B cell (primary cell): ENCODE measurements at regions of chr15 and their contacts with region 1.

Region 1: GRCh38 chr15:64552281-64552948 is 92.0 kb downstream of the ZNF609 start:
- DNase-seq: no peak
- ATAC-seq: no peak
- H3K4me3 ChIP-seq: no peak overlapping the region
- H3K4me3 Mint-ChIP-seq: no peak overlapping the region
- H3K27ac ChIP-seq: no peak overlapping the region
- H3K27ac Mint-ChIP-seq: no peak overlapping the region
- H3K4me1 ChIP-seq: no peaks in the 10 kb centered on the region
- H3K4me1 Mint-ChIP-seq: peaks cover 5% of the 10 kb centered on the region
- H3K27me3 ChIP-seq: no peaks in the 10 kb centered on the region
- H3K27me3 Mint-ChIP-seq: no peaks in the 10 kb centered on the region
- CTCF ChIP-seq: no peak

Region 2: DNA sequence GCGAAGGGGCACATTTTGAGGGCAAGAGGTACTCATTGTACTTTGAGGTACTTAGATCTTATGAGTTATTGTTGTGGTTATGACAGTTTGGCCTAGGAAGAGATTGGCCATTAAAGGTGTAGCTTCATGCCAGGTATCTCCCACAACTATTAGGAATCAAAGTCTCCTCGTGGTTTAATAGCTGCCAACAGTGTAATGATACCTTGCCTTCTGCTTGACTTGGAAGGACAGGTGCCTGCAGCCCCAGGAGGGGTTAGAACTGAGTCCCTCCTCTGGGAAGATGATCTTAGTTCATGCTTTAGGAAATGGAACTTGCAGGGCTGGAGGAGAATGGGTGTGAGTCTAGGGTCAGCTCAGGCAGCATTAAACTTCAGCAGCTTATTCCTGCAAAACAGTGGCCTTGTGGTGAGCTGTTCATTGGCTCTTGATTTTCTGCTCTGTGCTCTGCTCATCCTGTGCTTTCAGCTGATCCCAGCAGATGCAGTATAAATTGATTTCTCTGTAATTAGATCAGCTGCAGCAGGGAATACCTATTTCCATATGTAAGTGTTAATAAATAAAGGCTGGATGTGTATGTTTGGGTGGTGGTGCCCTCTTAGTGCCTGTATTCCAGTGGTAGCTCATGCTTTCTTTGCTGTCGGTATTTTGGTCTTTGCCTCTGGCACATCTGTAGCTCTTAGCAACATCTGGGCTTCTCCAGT is 51.6 kb before region 1 on chr15:
- CTCF ChIA-PET with region 1: no interaction called
- POLR2A ChIA-PET with region 1: interaction called, 10 read pairs
- intact Hi-C with region 1: no loop called
- DNase-seq: no peak
- ATAC-seq: no peak
- H3K4me3 ChIP-seq: no peak overlapping the region
- H3K4me3 Mint-ChIP-seq: no peak overlapping the region
- H3K27ac ChIP-seq: no peak overlapping the region
- H3K27ac Mint-ChIP-seq: no peak overlapping the region
- H3K4me1 ChIP-seq: peaks cover 15% of the 10 kb centered on the region in 2 donors
- H3K4me1 Mint-ChIP-seq: peaks cover 32% of the 10 kb centered on the region
- H3K27me3 ChIP-seq: no peaks in the 10 kb centered on the region
- H3K27me3 Mint-ChIP-seq: no peaks in the 10 kb centered on the region
- CTCF ChIP-seq: no peak

Region 3: DNA sequence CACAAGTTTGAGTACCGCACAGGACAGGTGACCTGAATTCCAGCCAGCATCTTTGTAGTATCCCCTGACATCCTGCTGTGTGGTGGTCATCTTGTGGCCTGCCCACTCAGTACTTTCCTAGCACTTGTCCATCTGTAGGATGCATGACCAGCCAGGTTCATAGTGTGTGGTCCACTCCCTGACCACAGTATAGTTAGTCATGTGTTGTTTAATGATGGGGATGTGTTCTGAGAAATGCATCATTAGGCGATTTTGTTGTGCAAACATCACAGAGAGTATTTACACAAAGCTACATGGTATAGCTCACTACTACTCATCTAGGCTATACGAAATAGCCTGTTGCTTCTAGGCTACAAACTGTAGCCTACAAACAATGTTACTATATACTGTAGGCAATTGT is 239.9 kb after region 1 on chr15:
- CTCF ChIA-PET with region 1: no interaction called
- POLR2A ChIA-PET with region 1: no interaction called
- intact Hi-C with region 1: no loop called
- DNase-seq: no peak
- ATAC-seq: no peak
- H3K4me3 ChIP-seq: no peak overlapping the region
- H3K4me3 Mint-ChIP-seq: no peak overlapping the region
- H3K27ac ChIP-seq: no peak overlapping the region
- H3K27ac Mint-ChIP-seq: no peak overlapping the region
- H3K4me1 ChIP-seq: no peaks in the 10 kb centered on the region
- H3K4me1 Mint-ChIP-seq: no peaks in the 10 kb centered on the region
- H3K27me3 ChIP-seq: no peaks in the 10 kb centered on the region
- H3K27me3 Mint-ChIP-seq: no peaks in the 10 kb centered on the region
- CTCF ChIP-seq: no peak